ENCODE measurements at regions of chr4 and their contacts with region 1.

Region 1: GRCh38 chr4:4368809-4369580 is 17.9 kb upstream of the NSG1 start:
- DNase-seq: no peak
- H3K4me3 ChIP-seq: no peak overlapping the region
- H3K27ac ChIP-seq: no peak overlapping the region
- H3K4me1 ChIP-seq: no peaks in the 10 kb centered on the region
- H3K27me3 ChIP-seq: no peaks in the 10 kb centered on the region
- CTCF ChIP-seq: no peak

Region 2: DNA sequence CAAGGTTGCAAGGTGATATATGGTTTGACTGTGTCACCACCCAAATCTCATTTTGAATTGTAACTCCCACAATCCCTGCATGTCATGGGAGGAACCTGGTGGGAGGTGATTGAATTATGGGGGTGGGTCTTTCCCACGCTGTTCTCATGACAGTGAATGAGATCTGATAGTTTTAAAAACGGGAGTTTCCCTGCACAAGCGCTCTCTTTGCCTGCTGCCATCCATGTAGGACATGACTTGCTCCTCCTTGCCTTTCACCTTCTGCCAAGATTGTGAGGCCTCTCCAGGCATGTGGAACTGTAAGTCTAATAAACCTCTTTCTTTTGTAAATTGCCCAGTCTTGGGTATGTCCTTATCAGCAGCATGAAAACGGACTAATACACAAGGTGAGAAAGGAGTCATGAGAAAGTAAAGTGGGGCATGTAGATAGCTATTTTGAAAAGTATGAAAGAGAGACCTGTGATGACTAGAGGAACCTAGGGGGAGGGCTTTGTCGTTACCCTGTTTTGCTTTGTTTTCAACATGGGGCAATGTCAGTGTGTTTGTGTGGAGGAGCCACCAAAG is 72.6 kb before region 1 on chr4:
- CTCF ChIA-PET with region 1: no interaction called
- dilution Hi-C with region 1: loop called (anchors 5 kb)
- in situ Hi-C with region 1: no loop called
- intact Hi-C with region 1: no loop called
- DNase-seq: no peak
- H3K4me3 ChIP-seq: no peak overlapping the region
- H3K27ac ChIP-seq: no peak overlapping the region
- H3K4me1 ChIP-seq: peaks cover 2% of the 10 kb centered on the region
- H3K27me3 ChIP-seq: no peaks in the 10 kb centered on the region
- CTCF ChIP-seq: no peak

Region 3: GRCh38 chr4:4327652-4328121 is 41.3 kb before region 1 on chr4:
- CTCF ChIA-PET with region 1: no interaction called
- dilution Hi-C with region 1: no loop called
- in situ Hi-C with region 1: no loop called
- intact Hi-C with region 1: no loop called
- DNase-seq: no peak
- H3K4me3 ChIP-seq: no peak overlapping the region
- H3K27ac ChIP-seq: no peak overlapping the region
- H3K4me1 ChIP-seq: no peaks in the 10 kb centered on the region
- H3K27me3 ChIP-seq: no peaks in the 10 kb centered on the region
- CTCF ChIP-seq: no peak

Region 4: DNA sequence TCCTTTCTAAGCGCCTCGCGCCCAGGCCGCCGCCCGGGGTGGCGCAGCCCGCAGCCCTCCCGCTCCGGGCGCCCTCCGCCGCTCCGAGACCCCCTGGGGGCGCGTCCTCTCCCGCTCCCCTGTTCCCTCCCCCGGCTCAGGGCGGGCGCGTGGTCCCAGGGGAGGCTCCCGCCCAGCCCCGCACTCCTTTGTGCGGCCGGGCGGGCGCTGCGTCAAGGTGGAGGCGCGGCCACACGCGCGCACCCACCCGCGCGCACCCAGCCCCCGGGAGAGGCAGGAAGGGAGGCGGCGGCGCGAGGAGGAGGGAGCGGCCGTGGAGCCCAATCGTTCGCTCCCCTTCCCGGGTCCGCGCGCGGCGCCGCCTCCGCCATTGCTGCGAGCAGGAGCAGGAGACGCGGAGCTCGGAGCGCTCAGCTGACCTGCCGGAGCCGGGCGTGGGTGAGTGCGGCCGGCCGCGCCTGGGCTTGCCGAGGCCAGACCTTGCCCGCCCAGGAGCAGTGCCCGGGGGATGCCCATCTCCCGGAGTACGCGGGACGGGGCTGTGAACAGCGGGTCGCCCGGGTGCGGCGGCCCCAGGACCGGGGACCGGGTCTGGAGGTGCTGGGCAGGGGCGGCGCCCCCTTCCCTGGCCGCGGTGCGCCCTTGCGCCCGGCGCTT is 17.9 kb after region 1 on chr4 and contains the start of gene NSG1:
- CTCF ChIA-PET with region 1: no interaction called
- dilution Hi-C with region 1: no loop called
- in situ Hi-C with region 1: no loop called
- intact Hi-C with region 1: no loop called
- DNase-seq: peak; percentile 58
- H3K4me3 ChIP-seq: peak within 1 kb of the TSS; percentile 54 to 71 (median 62)
- H3K27ac ChIP-seq: no peak within 1 kb of the TSS
- H3K4me1 ChIP-seq: peaks cover 14% of the 10 kb centered on the region
- H3K27me3 ChIP-seq: peaks cover 2% of the 10 kb centered on the region
- CTCF ChIP-seq: no peak
- total RNA-seq, gene NSG1: 17.5 to 31.4 TPM

Region 5: DNA sequence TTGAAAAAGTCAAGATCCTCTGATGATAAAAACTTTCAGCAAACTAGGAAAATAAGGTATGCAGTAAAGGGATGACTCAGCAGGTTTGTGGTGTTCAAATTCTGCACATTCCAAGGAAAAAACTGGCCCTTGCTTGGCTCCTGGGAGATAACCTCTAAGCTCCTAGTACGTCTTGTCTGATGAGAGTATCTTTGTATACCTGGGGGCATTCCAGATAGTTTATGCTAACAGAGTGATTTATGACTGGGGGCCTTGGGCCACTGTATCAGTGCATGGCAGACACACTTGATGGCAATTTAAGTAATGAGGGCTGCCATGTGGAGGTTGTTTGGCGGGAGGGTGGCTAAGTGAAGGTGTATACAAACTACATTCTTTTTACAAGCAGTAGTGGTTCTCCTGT is 74.8 kb after region 1 on chr4:
- CTCF ChIA-PET with region 1: no interaction called
- dilution Hi-C with region 1: loop called (anchors 5 kb)
- in situ Hi-C with region 1: no loop called
- intact Hi-C with region 1: no loop called
- DNase-seq: no peak
- H3K4me3 ChIP-seq: no peak overlapping the region
- H3K27ac ChIP-seq: no peak overlapping the region
- H3K4me1 ChIP-seq: peaks cover 10% of the 10 kb centered on the region
- H3K27me3 ChIP-seq: no peaks in the 10 kb centered on the region
- CTCF ChIP-seq: no peak